ENCODE measurements at regions of chr1 and their contacts with region 1.

Region 1: DNA sequence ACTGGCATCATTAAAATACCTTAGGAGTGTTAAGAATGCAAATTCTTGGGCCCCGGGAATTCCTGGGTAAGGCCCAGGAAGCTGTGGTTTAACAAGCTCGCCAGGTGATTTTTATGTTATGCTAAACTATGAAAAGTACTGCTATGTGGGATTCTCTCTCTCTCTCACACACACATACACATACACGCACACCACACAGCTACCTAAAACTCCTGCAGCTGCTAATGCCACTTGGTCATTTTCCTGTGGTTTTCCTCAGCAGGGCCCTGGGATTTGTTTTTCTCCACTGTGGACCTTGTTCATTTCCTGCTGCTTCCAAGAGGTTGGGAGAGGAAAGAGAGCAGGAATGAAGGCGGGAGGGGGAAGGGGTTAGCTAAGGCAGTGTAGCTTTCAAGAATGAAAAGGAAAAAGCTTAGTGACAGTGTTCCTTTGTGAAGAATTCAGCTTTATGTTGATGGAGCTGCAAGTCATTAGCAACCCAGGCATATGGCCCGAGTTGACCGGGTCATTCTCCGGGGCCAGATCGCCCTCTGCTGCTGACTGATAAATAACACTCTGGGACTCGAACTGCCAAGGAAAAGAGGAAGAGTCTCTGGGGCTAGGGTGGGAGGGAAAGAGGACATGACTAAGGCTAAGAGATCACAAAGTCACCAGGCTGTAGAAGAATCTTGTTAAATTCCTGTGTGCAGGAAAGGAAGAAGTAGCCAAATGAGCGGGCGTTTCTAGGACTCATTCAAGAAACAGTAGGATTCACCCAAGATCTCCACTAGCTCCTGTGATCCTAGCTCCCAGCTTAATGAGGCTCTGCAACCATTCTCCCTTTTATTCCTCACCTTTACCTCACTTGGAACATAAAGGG is 30.5 kb upstream of the LRIG2 start:
- DNase-seq: peak; percentile 75

Region 2: GRCh38 chr1:112882271-112882744 is 160.2 kb before region 1 on chr1:
- CTCF ChIA-PET with region 1: interaction called, 10 read pairs
- POLR2A ChIA-PET with region 1: interaction called, 5 read pairs
- DNase-seq: no peak

Measured in HEK293T (cell line).